Lower leg skin (tissue), 4 donors: ENCODE measurements at regions of chr15 and their contacts with region 1.

Region 1: DNA sequence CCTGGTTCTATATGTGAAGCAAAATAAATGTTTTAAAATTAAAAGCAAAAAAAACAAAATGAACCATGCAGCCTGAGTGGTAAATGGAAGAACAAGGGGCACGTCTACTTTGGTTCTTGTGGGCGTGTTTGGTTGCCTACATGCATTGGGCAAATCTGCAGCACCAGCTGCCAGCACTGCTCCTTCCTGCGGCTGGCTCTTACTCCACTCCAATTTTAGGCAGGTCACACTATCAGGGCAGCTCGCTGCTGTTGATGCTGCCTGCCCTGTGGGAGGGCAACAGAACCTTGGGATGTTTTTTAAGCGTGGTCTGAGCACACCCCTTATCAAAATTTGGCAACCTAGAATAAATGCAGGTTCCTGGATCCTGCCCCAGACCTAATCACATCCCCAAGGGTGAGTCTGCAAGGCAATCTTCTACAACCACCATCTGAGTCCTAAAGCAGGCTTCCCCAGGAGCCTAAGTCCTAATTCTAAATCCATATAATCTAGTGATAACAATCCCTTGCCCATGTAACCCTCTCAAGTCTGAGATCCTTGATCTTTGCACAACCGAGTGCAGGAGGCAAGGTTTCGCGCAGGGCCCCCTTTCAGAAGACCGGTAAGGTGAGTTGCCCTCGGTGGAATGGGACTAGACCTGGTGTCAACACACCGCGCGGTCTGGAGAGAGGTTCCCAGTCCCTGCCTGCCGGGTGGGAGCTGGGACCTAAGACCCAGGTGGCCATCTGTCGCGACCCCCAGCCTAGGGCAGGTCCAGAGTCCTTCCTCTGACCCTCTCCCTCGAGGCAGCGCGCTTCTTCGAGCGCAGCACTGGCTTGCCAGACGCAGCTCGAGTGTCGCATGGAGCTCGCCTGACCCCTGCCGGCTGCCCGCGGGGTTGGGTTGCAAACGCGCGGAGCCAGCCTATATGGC is 15.9 kb downstream of the IVD start:
- DNase-seq: peak in 1 of 2 donors; percentile 93
- H3K4me3 ChIP-seq: no peak overlapping the region
- CTCF ChIP-seq: peak in 1 of 3 donors; percentile 94
- POLR2A ChIP-seq: no peak

Region 2: GRCh38 chr15:40357723-40358470 is 63.6 kb before region 1 on chr15 and contains the start of gene DISP2:
- intact Hi-C with region 1: no loop called
- DNase-seq: peak; percentile 75 to 97
- H3K4me3 ChIP-seq: no peak within 1 kb of the TSS
- CTCF ChIP-seq: no peak
- POLR2A ChIP-seq: no peak
- total RNA-seq, gene DISP2: 0.05 to 0.08 (median 0.06) TPM in 3 of 4 donors, not detected in the other

Region 3: GRCh38 chr15:40379853-40380252 is 41.6 kb before region 1 on chr15:
- intact Hi-C with region 1: loop called (anchors 10 kb)
- DNase-seq: peak in 1 of 2 donors; percentile 64
- H3K4me3 ChIP-seq: no peak overlapping the region
- CTCF ChIP-seq: no peak
- POLR2A ChIP-seq: no peak